Activated B cell treated with CpG ODN at 0.5 μM for 24 hours (primary cell): ENCODE measurements at regions of chr1 and their contacts with region 1.

Region 1: GRCh38 chr1:28552758-28553663 is at the start of gene TRNAU1AP:
- DNase-seq: peak; percentile 94
- ATAC-seq: peak; percentile 93
- H3K4me3 Mint-ChIP-seq: peak within 1 kb of the TSS; percentile 99
- H3K27ac Mint-ChIP-seq: peak within 1 kb of the TSS; percentile 98
- H3K4me1 Mint-ChIP-seq: peaks cover 26% of the 10 kb centered on the region
- H3K27me3 Mint-ChIP-seq: no peaks in the 10 kb centered on the region
- CTCF ChIP-seq: no peak
- total RNA-seq, gene TRNAU1AP: 36.9 and 42.0 TPM in 2 replicates

Region 2: DNA sequence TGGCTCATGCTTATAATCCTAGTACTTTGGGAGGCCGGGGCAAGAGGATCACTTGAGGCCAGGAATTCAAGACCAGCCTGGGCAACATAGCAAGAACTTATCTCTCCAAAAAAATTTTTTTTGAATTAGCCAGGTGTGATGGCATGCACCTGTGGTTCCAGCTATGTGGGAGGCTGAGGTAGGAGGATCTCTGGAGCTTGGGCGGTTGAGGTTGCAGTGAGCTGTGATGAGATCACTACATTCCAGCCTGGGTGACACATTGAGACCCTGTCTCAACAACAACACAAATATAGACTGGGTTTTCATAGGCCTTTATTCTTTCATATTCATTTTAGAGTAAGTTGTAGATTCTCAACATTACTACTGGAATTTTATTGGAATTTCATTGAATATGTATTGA is 211.4 kb before region 1 on chr1:
- CTCF ChIA-PET with region 1: no interaction called
- POLR2A ChIA-PET with region 1: no interaction called
- intact Hi-C with region 1: no loop called
- DNase-seq: no peak
- ATAC-seq: no peak
- H3K4me3 Mint-ChIP-seq: no peak overlapping the region
- H3K27ac Mint-ChIP-seq: no peak overlapping the region
- H3K4me1 Mint-ChIP-seq: no peaks in the 10 kb centered on the region
- H3K27me3 Mint-ChIP-seq: no peaks in the 10 kb centered on the region
- CTCF ChIP-seq: no peak

Region 3: GRCh38 chr1:28369371-28370238 is 183.4 kb before region 1 on chr1 and contains the start of gene PHACTR4:
- CTCF ChIA-PET with region 1: no interaction called
- POLR2A ChIA-PET with region 1: no interaction called
- intact Hi-C with region 1: loop called (anchors 1 kb)
- DNase-seq: peak; percentile 74
- ATAC-seq: peak; percentile 89
- H3K4me3 Mint-ChIP-seq: peak within 1 kb of the TSS; percentile 96
- H3K27ac Mint-ChIP-seq: peak within 1 kb of the TSS; percentile 98
- H3K4me1 Mint-ChIP-seq: peaks cover 21% of the 10 kb centered on the region
- H3K27me3 Mint-ChIP-seq: no peaks in the 10 kb centered on the region
- CTCF ChIP-seq: no peak
- total RNA-seq, gene PHACTR4: 27.2 and 31.5 TPM in 2 replicates

Region 4: GRCh38 chr1:28510665-28511440 is 42.2 kb before region 1 on chr1:
- CTCF ChIA-PET with region 1: no interaction called
- POLR2A ChIA-PET with region 1: interaction called, 37 read pairs
- intact Hi-C with region 1: no loop called
- DNase-seq: no peak
- ATAC-seq: peak; percentile 8
- H3K4me3 Mint-ChIP-seq: peak overlapping the region; percentile 98
- H3K27ac Mint-ChIP-seq: peak overlapping the region; percentile 98
- H3K4me1 Mint-ChIP-seq: peaks cover 44% of the 10 kb centered on the region
- H3K27me3 Mint-ChIP-seq: no peaks in the 10 kb centered on the region
- CTCF ChIP-seq: no peak

Region 5: DNA sequence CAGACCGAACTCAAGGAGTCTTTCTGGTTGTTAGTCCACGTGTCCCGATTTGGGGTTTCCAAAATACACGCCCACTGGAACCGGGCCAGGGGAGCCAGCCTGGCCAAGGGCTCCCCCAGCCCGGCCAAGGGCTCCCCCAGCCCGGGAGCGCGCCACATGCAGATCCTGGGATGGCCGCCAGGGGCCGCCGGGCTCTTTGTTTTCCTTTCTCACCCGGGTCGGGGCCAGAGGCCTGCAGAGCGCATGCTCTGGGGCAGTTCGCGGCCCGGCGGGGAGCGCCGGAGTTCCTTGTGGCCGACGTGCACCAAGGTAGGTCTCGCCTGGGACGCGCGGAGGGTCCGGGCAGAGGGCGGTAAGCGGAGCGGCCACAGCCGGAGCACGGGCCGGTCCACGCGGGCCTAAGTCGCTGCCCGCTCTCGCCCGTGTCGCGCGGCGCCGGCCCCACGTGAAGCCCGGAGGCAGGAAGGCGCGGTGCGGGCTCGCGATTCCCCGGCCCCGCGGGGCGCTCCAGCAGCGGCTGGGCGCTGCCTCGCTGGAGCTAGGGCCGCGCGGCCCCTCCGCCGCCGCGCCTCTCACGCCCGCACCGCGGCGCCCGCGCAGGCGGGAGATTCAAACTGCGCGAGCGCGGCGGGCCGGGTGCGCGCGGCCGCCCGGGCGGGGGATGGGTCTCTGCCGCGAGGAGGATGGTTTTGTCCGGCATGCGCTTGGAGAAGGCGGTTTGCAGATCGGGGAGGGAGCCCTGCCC is 34.8 kb before region 1 on chr1:
- CTCF ChIA-PET with region 1: no interaction called
- POLR2A ChIA-PET with region 1: interaction called, 4 read pairs
- intact Hi-C with region 1: loop called (anchors 1 kb)
- DNase-seq: peak; percentile 89
- ATAC-seq: peak; percentile 88
- H3K4me3 Mint-ChIP-seq: peak overlapping the region; percentile 90
- H3K27ac Mint-ChIP-seq: peak overlapping the region; percentile 73
- H3K4me1 Mint-ChIP-seq: peaks cover 28% of the 10 kb centered on the region
- H3K27me3 Mint-ChIP-seq: no peaks in the 10 kb centered on the region
- CTCF ChIP-seq: no peak

Region 6: GRCh38 chr1:28668191-28668955 is 115.4 kb after region 1 on chr1 and contains the start of gene GMEB1:
- CTCF ChIA-PET with region 1: no interaction called
- POLR2A ChIA-PET with region 1: interaction called, 13 read pairs
- intact Hi-C with region 1: loop called (anchors 1 kb)
- DNase-seq: peak; percentile 73
- ATAC-seq: peak; percentile 65
- H3K4me3 Mint-ChIP-seq: peak within 1 kb of the TSS; percentile 92
- H3K27ac Mint-ChIP-seq: peak within 1 kb of the TSS; percentile 97
- H3K4me1 Mint-ChIP-seq: peaks cover 17% of the 10 kb centered on the region
- H3K27me3 Mint-ChIP-seq: no peaks in the 10 kb centered on the region
- CTCF ChIP-seq: no peak
- total RNA-seq, gene GMEB1: 26.8 and 27.4 TPM in 2 replicates

Region 7: DNA sequence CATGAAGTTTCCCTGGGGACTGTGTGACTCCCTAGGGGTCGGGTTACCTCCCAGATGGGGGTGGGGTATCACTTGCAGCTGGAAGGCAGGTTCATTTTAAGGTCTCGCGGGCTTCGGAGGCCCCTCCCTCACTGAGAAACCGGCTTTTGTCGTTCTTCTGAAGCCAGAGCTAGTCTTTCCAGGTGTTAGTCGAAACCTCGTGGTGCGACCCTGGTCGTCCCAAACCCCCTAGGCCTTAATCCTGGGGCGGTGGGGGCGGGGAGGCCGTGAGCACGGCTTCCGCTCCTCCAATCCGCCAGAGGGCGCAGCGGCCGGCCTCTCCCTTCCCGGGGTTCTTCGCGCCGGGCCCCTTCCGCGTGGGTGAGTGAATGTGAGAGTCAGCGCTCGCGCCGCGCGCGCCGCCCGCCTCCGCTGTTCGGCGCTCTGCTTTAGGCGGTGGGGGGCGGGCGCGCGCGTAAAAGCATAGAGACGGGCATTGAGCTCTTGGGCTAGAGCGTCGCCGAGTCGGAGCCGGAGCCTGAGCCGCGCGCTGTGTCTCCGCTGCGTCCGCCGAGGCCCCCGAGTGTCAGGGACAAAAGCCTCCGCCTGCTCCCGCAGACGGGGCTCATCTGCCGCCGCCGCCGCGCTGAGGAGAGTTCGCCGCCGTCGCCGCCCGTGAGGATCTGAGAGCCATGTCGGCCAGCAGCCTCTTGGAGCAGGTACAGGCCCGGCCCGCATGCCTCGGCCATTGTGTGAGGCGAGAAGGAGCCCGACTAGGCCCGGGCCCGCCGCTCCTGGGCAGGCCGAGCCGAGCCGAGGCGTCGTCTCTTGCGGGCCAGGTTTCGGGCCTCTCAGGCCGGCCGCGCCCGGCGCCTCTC is 183.7 kb after region 1 on chr1 and contains the start of gene YTHDF2:
- CTCF ChIA-PET with region 1: no interaction called
- POLR2A ChIA-PET with region 1: interaction called, 7 read pairs
- intact Hi-C with region 1: loop called (anchors 2 kb)
- DNase-seq: peak; percentile 96
- ATAC-seq: peak; percentile 93
- H3K4me3 Mint-ChIP-seq: peak within 1 kb of the TSS; percentile 96
- H3K27ac Mint-ChIP-seq: peak within 1 kb of the TSS; percentile 91
- H3K4me1 Mint-ChIP-seq: peaks cover 30% of the 10 kb centered on the region
- H3K27me3 Mint-ChIP-seq: no peaks in the 10 kb centered on the region
- CTCF ChIP-seq: peak; percentile 83
- total RNA-seq, gene YTHDF2: 70.6 and 81.2 TPM in 2 replicates